Heart right ventricle (tissue), 16 donors: ENCODE measurements at regions of chr2 and their contacts with region 1.

Region 1: DNA sequence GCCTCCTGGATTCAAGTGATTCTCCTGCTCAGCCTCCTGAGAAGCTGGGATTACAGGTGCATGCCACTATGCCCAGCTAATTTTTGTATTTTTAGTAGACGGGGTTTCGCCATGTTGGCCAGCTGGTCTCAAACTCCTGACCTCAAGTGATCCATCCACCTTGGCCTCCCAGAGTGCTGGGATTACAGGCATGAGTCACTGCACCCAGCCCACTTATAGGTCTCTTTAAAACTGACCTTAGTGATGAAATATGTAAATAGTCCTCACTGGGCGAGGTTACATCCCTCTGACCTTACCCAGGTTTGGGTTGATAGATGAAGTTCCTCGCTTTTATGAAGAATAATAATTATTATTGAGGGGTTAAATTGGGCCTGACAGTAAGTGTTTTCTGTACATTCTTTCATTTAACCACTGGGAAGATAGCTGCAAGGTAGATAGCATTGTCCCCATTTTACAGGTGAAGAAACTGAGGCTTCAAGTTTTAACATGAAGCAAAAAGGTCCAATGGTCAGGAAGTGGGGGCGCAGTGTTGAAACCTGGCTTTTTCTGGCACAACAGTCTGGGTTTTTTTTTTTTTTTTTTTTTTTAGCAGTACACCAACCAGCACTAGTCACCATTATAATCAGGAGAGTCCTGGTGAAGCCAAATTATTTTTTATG is 174.8 kb upstream of the EPAS1 start:
- DNase-seq: no peak
- ATAC-seq: no peak
- H3K4me3 ChIP-seq: no peak overlapping the region
- H3K27ac ChIP-seq: peak overlapping the region in 3 of 10 donors; percentile 8 to 89 (median 38)
- H3K4me1 ChIP-seq: peaks cover 12 to 74% (median 47%) of the 10 kb centered on the region in 9 donors
- H3K27me3 ChIP-seq: no peaks in the 10 kb centered on the region
- CTCF ChIP-seq: no peak

Region 2: DNA sequence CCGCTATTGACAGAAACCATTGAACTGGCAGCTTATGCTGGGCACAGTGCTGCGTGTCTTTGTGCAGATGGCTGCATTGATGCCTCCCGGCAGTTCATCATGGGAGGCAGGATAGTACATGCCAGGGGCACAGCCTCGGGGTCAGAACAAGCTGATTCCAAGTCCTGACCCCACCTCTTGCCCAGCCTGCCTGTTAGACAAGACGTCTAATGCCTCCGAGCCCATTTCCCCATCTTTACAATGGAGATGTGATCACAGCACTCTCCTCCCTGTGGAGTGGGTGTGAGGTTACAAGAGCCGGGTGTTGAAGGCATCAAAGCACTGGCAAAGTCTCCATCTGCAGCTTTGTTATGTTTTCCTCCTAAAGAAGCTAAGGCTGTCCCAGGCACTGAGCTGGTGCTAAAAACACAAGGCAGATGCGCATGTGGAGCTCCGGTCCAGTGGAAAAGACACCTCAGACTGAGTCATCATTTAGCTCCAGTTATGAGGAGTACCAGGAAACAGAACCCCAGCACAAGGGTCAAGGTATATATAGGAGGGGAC is 49.0 kb after region 1 on chr2:
- intact Hi-C with region 1: loop called in 1 of 10 experiments (anchors 5 kb)
- DNase-seq: no peak
- ATAC-seq: peak in 5 of 8 donors; percentile 10 to 59 (median 31)
- H3K4me3 ChIP-seq: no peak overlapping the region
- H3K27ac ChIP-seq: peak overlapping the region in 1 of 10 donors; percentile 38
- H3K4me1 ChIP-seq: peaks cover 0 to 18% (median 11%) of the 10 kb centered on the region in 9 donors
- H3K27me3 ChIP-seq: no peaks in the 10 kb centered on the region
- CTCF ChIP-seq: no peak

Region 3: GRCh38 chr2:46268196-46268595 is 145.7 kb after region 1 on chr2:
- intact Hi-C with region 1: loop called in 1 of 10 experiments (anchors 5 kb)
- DNase-seq: no peak
- ATAC-seq: peak in 5 of 8 donors; percentile 41 to 57 (median 54)
- H3K4me3 ChIP-seq: peak overlapping the region in 1 of 10 donors; percentile 3
- H3K27ac ChIP-seq: peak overlapping the region in 8 of 10 donors; percentile 18 to 84 (median 55)
- H3K4me1 ChIP-seq: peaks cover 0 to 70% (median 49%) of the 10 kb centered on the region in 9 donors
- H3K27me3 ChIP-seq: no peaks in the 10 kb centered on the region
- CTCF ChIP-seq: no peak